Activated T-helper 1 cell treated with anti-CD3 and anti-CD28 coated beads, Interleukin-12 subunit alpha, Interleukin-12 subunit beta, Interleukin-2, Interleukin-4 antibody, amounts not matched to agents 30 ng/mL and 10 ng/mL and 1 ng/mL, durations not matched to agents 14 hours and 24 hours and 36 hours (primary cell): ENCODE measurements at regions of chr4 and their contacts with region 1.

Region 1: GRCh38 chr4:118676128-118676527 is 9.1 kb upstream of the METTL14 start:
- DNase-seq: no peak
- H3K4me3 Mint-ChIP-seq: no peak overlapping the region
- H3K27ac Mint-ChIP-seq: no peak overlapping the region
- H3K4me1 Mint-ChIP-seq: no peaks in the 10 kb centered on the region
- H3K27me3 Mint-ChIP-seq: no peaks in the 10 kb centered on the region

Region 2: DNA sequence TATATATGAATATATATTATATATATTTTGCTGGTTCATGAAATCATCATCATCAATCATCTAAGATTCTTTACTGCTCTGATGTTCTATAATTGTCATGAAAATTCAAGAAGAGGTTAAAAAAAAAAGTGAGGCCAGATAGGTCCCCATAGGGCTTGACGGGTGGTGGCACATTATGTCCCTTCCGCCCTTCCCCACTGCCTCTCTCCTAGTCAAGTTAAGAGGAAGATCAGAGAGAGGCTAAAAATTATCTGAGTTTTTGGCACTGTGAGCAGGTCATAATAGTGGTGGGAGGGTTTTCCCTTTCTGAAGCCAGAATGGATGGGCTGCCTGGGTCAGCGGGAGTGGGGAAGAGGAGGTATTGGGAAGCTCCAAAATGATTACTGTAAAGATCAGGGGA is 217.9 kb after region 1 on chr4:
- intact Hi-C with region 1: loop called (anchors 5 kb)
- DNase-seq: no peak
- H3K4me3 Mint-ChIP-seq: no peak overlapping the region
- H3K27ac Mint-ChIP-seq: no peak overlapping the region
- H3K4me1 Mint-ChIP-seq: peaks cover 9% of the 10 kb centered on the region
- H3K27me3 Mint-ChIP-seq: peaks cover 14% of the 10 kb centered on the region